Esophagus muscularis mucosa (tissue), 4 donors: ENCODE measurements at regions of chr16 and their contacts with region 1.

Region 1: DNA sequence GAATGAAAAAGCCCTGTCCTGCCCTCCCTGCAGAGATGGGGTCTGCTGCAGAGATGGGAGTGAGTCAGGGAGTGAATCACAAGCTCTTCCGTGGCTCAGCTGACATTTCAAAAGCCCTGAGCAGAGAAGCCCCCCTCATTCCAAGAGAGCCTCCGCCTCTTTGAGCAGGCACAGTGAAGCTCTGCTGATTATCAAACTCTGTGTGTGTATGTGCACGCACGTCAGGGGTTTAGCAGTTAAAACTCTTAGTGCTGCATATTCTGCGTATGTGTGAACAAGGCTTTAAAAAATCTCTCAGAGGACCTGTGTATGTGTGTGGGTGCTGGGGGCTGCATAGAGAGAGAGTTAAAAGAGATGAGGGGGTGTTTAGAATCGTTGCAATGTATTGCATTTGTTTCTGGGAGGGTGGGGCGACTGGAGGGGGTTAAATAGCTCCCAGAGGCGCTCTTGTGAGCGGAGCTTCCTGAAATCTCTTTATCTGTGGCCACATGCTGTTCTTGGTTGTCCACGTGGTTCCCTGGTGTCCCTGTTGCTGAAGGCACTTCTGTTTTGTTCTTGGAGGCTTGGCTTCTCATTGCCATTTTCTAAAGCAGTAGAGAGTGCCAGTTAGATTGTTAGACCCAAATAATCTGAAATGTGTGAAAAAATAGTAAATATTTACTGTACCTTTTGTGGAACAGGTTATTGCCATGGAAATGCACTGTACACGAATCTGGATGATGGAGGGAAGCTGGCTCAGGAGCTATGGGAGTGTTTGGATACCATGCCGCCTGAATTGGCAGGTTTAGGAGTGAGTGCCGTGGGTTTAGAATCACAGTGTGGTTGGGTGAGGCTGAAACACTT is 116.6 kb downstream of the PRKCB start:
- DNase-seq: no peak
- H3K4me3 ChIP-seq: no peak overlapping the region
- H3K27ac ChIP-seq: no peak overlapping the region
- H3K4me1 ChIP-seq: peaks cover 0 to 14% (median 6%) of the 10 kb centered on the region in 4 donors
- H3K27me3 ChIP-seq: no peaks in the 10 kb centered on the region
- CTCF ChIP-seq: no peak
- EP300 ChIP-seq: no peak
- POLR2A ChIP-seq: no peak

Region 2: GRCh38 chr16:23905027-23905426 is 47.3 kb before region 1 on chr16:
- intact Hi-C with region 1: no loop called
- DNase-seq: no peak
- H3K4me3 ChIP-seq: no peak overlapping the region
- H3K27ac ChIP-seq: peak overlapping the region; percentile 67 to 79 (median 73)
- H3K4me1 ChIP-seq: peaks cover 5 to 28% (median 14%) of the 10 kb centered on the region in 4 donors
- H3K27me3 ChIP-seq: no peaks in the 10 kb centered on the region
- CTCF ChIP-seq: no peak
- EP300 ChIP-seq: no peak
- POLR2A ChIP-seq: no peak

Region 3: GRCh38 chr16:23999663-24000062 is 47.3 kb after region 1 on chr16:
- intact Hi-C with region 1: loop called (anchors 10 kb)
- DNase-seq: no peak
- H3K4me3 ChIP-seq: no peak overlapping the region
- H3K27ac ChIP-seq: no peak overlapping the region
- H3K4me1 ChIP-seq: no peaks in the 10 kb centered on the region
- H3K27me3 ChIP-seq: no peaks in the 10 kb centered on the region
- CTCF ChIP-seq: no peak
- EP300 ChIP-seq: no peak
- POLR2A ChIP-seq: no peak